Mammary epithelial cell (primary cell): ENCODE measurements at regions of chrX and their contacts with region 1.

Region 1: GRCh38 chrX:71492231-71493065 is 40.5 kb upstream of the OGT start:
- DNase-seq: peak; percentile 14
- H3K4me3 ChIP-seq: peak overlapping the region; percentile 17 to 42 (median 38)
- H3K27ac ChIP-seq: no peak overlapping the region
- H3K4me1 ChIP-seq: peaks cover 7% of the 10 kb centered on the region
- H3K27me3 ChIP-seq: no peaks in the 10 kb centered on the region
- CTCF ChIP-seq: no peak

Region 2: GRCh38 chrX:71144651-71145050 is 347.8 kb before region 1 on chrX and contains the start of gene NLGN3:
- CTCF ChIA-PET with region 1: no interaction called
- dilution Hi-C with region 1: no loop called
- in situ Hi-C with region 1: no loop called
- intact Hi-C with region 1: no loop called
- DNase-seq: no peak
- H3K4me3 ChIP-seq: no peak within 1 kb of the TSS
- H3K27ac ChIP-seq: no peak within 1 kb of the TSS
- H3K4me1 ChIP-seq: no peaks in the 10 kb centered on the region
- H3K27me3 ChIP-seq: no peaks in the 10 kb centered on the region
- CTCF ChIP-seq: no peak
- total RNA-seq, gene NLGN3: 0.17 to 0.21 TPM

Region 3: GRCh38 chrX:71393919-71394318 is 98.5 kb before region 1 on chrX:
- CTCF ChIA-PET with region 1: no interaction called
- dilution Hi-C with region 1: loop called (anchors 5 kb)
- in situ Hi-C with region 1: no loop called
- intact Hi-C with region 1: no loop called
- DNase-seq: no peak
- H3K4me3 ChIP-seq: no peak overlapping the region
- H3K27ac ChIP-seq: no peak overlapping the region
- H3K4me1 ChIP-seq: no peaks in the 10 kb centered on the region
- H3K27me3 ChIP-seq: no peaks in the 10 kb centered on the region
- CTCF ChIP-seq: no peak

Region 4: GRCh38 chrX:71541210-71542022 is 49.0 kb after region 1 on chrX:
- CTCF ChIA-PET with region 1: no interaction called
- dilution Hi-C with region 1: no loop called
- in situ Hi-C with region 1: no loop called
- intact Hi-C with region 1: loop called (anchors 2 kb)
- DNase-seq: peak; percentile 29
- H3K4me3 ChIP-seq: no peak overlapping the region
- H3K27ac ChIP-seq: peak overlapping the region; percentile 48
- H3K4me1 ChIP-seq: peaks cover 20% of the 10 kb centered on the region
- H3K27me3 ChIP-seq: no peaks in the 10 kb centered on the region
- CTCF ChIP-seq: no peak